ENCODE measurements at regions of chr1 and their contacts with region 1.

Region 1: GRCh38 chr1:9399510-9400424 is 107.1 kb downstream of the SPSB1 start:
- DNase-seq: peak; percentile 65
- ATAC-seq: peak; percentile 85
- H3K4me3 ChIP-seq: peak overlapping the region; percentile 32 to 75 (median 41)
- H3K27ac ChIP-seq: peak overlapping the region; percentile 38
- H3K4me1 ChIP-seq: peaks cover 56% of the 10 kb centered on the region
- H3K27me3 ChIP-seq: peaks cover 0 to 26% of the 10 kb centered on the region in 2 experiments; a peak in 4 of 5 replicates
- CTCF ChIP-seq: no peak
- EP300 ChIP-seq: peak in 1 of 2 experiments; percentile 25; a peak in 1 of 4 replicates
- POLR2A ChIP-seq: no peak
- RAD21 ChIP-seq: 0 out of 2 replicates have a peak, but pooled peaks have one; percentile 14

Region 2: DNA sequence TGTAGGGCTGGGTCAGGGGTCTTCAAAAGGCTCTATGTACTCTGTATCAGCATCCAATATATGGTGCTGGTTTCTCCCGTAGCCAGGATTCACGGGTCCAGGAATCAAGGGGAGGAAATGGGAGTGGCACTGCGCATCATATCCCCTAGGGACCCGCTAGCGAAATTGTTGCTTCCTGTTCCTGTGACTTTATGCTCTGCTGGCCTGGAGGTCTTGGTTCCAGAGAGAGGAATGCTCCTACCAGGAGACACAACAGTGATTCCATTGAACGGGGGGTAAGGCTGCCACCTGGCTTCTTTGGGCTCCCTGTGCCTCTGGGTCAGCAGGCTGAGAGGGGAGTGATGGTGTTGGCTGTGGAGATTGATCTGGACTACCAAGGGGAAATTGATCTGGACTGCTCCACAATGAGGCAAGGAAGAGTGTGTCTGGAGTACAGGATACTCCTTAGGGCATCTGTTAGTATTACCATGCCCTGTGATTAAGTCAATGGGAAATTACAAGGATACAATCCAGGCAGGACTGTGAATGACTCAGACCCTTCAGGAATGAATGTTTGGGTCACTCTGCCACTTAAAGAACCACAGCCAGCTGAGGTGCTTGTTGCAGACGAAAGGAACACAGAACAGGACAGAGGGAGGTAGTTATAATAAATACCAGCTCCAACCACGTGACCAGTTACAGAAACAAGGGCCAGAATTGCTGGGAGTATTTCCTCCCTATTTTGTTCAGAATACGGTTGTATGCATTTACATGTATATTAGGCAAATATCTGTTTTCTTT is 96.8 kb before region 1 on chr1:
- CTCF ChIA-PET with region 1: no interaction called
- POLR2A ChIA-PET with region 1: no interaction called
- in situ Hi-C with region 1: no loop called
- intact Hi-C with region 1: no loop called
- DNase-seq: no peak
- ATAC-seq: no peak
- H3K4me3 ChIP-seq: no peak overlapping the region
- H3K27ac ChIP-seq: no peak overlapping the region
- H3K4me1 ChIP-seq: peaks cover 14% of the 10 kb centered on the region
- H3K27me3 ChIP-seq: no peaks in the 10 kb centered on the region
- CTCF ChIP-seq: no peak
- EP300 ChIP-seq: no peak
- POLR2A ChIP-seq: no peak
- RAD21 ChIP-seq: no peak

Region 3: DNA sequence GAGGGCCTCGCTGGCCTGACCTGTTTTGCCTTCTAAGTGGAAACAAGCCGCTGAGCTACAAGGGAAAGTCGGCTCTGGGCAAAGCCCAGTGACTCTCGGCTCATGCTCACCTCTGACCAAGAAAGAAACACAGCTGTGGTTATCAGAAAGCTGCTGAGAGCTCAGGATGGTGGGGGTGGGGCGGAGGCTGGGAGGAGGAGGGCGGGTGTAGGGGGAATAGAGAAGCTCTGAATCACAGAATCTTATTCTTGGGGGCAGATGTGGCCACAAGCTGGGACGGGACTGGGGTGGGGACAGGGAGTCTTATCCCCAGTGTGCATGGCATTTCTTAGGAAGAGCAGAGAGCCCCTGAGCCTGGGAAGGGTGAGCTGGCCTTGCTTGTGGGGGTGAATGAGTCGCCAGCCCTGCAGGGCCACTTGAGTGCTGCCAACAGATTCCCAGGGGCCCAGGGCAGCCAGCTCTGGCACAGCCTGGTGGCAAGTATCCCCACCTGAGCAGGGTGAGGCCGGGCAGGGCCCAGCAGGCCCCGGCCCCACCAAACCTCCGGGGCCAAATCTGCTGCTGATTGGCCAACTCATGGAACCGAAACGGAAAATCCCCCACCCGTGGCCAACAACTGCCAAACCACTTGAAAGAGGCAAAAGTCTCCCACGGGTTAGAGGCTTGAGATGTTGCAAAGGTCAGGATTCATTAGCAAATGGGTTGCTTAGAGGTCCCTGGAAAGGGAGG is 13.5 kb after region 1 on chr1:
- CTCF ChIA-PET with region 1: no interaction called
- POLR2A ChIA-PET with region 1: interaction called, 13 read pairs
- in situ Hi-C with region 1: no loop called
- intact Hi-C with region 1: no loop called
- DNase-seq: no peak
- ATAC-seq: peak; percentile 59
- H3K4me3 ChIP-seq: peak overlapping the region; percentile 18 to 59 (median 34); a peak in 3 of 6 replicates
- H3K27ac ChIP-seq: no peak overlapping the region
- H3K4me1 ChIP-seq: peaks cover 32% of the 10 kb centered on the region
- H3K27me3 ChIP-seq: peaks cover 3 to 17% of the 10 kb centered on the region in 2 experiments; a peak in 3 of 5 replicates
- CTCF ChIP-seq: no peak
- EP300 ChIP-seq: no peak
- POLR2A ChIP-seq: no peak
- RAD21 ChIP-seq: no peak

Region 4: GRCh38 chr1:9420835-9421532 is 21.2 kb after region 1 on chr1:
- CTCF ChIA-PET with region 1: no interaction called
- POLR2A ChIA-PET with region 1: interaction called, 12 read pairs
- in situ Hi-C with region 1: no loop called
- intact Hi-C with region 1: no loop called
- DNase-seq: no peak
- ATAC-seq: no peak
- H3K4me3 ChIP-seq: no peak overlapping the region
- H3K27ac ChIP-seq: no peak overlapping the region
- H3K4me1 ChIP-seq: peaks cover 37% of the 10 kb centered on the region
- H3K27me3 ChIP-seq: peaks cover 2 to 30% of the 10 kb centered on the region in 2 experiments; a peak in 2 of 5 replicates
- CTCF ChIP-seq: no peak
- EP300 ChIP-seq: no peak
- POLR2A ChIP-seq: no peak
- RAD21 ChIP-seq: no peak

Region 5: DNA sequence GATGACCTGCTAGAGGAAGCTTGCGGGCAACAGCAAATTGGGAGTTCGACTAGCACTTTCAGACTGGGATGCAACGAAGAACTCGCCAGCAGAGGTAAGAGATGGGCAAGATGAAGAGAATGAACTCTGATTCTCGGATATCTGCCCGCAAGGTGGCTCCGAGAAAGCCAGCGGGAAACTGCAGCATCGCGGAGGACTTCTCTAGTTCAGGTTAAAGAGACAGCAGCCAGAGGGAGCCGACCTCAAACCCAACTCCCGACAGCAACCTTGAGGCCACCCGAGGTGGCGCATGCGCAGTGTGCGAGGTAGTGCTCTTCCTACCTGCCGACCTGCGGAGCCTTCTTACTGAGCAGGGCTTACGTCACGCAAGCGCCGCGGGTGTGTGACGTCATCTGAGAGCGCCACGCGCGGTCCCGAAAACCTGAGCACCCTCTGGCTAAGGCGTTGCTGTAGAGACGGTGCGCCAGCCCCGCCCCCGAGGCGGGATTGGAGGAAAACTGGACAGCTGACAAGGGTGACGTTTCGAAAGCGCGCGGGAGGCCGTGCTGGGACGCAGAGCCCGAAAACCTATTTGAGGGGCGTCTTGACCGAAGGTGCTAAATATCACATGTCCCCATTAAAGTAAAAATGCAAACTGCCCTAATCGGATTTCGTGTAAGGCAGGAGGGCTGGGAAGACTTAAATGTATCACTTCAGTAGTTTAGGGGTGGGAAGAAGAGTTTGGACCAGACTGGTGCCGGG is 29.0 kb after region 1 on chr1:
- CTCF ChIA-PET with region 1: no interaction called
- POLR2A ChIA-PET with region 1: interaction called, 13 read pairs
- in situ Hi-C with region 1: no loop called
- intact Hi-C with region 1: no loop called
- DNase-seq: peak; percentile 98
- ATAC-seq: peak; percentile 93
- H3K4me3 ChIP-seq: peak overlapping the region; percentile 46 to 69 (median 60)
- H3K27ac ChIP-seq: peak overlapping the region; percentile 58
- H3K4me1 ChIP-seq: peaks cover 60% of the 10 kb centered on the region
- H3K27me3 ChIP-seq: no peaks in the 10 kb centered on the region
- CTCF ChIP-seq: peak; percentile 77
- EP300 ChIP-seq: no peak; a peak in 1 of 4 replicates
- POLR2A ChIP-seq: peak; percentile 41 to 79
- RAD21 ChIP-seq: peak; percentile 85

Region 6: GRCh38 chr1:9438431-9439073 is 38.8 kb after region 1 on chr1:
- CTCF ChIA-PET with region 1: no interaction called
- POLR2A ChIA-PET with region 1: interaction called, 26 read pairs
- in situ Hi-C with region 1: no loop called
- intact Hi-C with region 1: loop called (anchors 5 kb)
- DNase-seq: peak; percentile 91
- ATAC-seq: peak; percentile 59
- H3K4me3 ChIP-seq: peak overlapping the region; percentile 29 to 64 (median 30)
- H3K27ac ChIP-seq: peak overlapping the region; percentile 88
- H3K4me1 ChIP-seq: peaks cover 100% of the 10 kb centered on the region
- H3K27me3 ChIP-seq: no peaks in the 10 kb centered on the region
- CTCF ChIP-seq: no peak
- EP300 ChIP-seq: peak; percentile 52 to 64; a peak in 2 of 4 replicates
- POLR2A ChIP-seq: peak; percentile 49 to 51; a peak in 2 of 4 replicates
- RAD21 ChIP-seq: no peak

Measured in HepG2 (cell line).